Right ventricle myocardium superior (tissue), 1 donor: ENCODE measurements at regions of chr1 and their contacts with region 1.

Region 1: DNA sequence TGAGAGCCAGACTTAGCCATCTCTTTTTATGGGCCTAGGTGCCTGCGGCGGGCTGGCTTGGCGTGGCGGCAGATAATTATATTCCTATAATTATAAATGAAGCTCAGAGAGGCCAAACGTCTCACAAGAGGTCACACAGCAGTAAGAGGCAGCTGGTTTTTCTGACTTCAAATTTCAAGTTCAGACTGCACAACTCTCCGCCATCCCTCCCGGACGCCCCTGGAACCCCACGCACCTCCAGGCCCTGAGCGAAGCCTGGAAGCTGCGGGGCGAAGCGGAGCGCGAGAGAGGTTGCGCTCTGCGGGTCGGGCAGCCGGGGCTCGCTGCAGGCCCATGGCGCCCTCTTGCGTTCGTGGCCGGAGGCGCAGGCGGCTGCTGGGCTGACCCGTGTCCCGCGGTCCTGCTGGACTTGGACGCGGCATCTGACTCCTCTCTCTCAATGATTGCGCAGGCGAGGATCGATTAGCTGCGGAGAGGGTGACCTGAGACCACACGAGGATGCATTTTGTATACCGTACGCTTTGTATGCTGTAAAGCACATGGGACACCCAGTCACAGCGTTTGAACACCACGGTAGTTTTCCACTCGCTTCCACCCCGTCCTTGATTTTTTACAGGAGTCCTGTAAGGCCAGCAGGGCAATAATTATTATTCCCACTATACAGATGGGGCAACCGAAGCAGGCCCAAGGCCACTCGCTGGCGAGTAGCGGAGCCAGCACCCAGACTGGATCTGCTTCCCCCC is 272.7 kb downstream of the FOXD2 start:
- DNase-seq: peak; percentile 85
- ATAC-seq: peak; percentile 95

Region 2: DNA sequence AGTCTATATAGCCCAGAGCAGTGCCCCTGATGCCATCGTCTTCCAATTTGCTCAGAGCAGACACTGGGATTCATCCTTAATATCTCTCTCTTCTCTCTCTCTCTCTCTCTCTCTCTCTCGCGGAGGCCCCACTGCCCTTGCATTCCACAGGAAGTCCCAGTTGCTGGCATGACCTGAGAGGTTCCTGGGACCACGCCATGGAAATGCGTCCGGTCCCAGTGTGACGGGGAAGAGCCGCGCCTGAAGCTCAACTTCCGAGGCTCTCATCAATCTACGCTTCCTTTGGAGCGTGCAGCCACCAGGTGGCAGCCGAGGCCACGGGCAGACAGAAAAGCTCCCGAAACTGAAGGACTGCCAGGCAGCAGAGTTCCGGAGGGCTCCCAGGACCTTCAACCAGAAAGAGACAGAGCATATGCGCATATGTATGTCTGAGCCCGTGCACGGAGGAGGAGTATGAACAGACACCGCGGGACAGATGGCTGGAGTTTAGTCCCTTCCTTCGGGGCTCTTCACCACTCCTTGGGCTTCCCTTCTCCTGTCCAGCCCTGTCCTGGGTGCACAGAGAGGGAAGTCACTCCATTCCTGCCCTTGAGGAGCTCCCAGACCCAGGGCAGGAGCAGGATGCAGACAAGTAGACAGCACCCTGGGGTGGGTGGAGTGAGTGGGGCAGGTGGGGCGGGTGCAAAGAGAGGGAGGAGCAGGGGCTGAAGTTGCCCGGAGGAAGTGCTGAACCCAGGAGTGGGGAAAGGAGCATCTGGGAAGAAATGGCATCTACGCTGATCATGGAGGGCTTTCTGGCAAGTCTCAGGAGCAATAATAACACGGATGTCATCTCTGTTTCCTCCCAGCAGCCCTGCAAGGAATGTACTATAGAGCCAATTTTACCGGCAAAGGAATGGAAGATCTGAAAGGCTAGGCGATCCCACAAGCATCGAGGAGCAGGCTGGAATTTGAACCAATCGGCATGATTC is 531.2 kb before region 1 on chr1:
- intact Hi-C with region 1: loop called (anchors 5 kb)
- DNase-seq: peak; percentile 95
- ATAC-seq: peak; percentile 94

Region 3: DNA sequence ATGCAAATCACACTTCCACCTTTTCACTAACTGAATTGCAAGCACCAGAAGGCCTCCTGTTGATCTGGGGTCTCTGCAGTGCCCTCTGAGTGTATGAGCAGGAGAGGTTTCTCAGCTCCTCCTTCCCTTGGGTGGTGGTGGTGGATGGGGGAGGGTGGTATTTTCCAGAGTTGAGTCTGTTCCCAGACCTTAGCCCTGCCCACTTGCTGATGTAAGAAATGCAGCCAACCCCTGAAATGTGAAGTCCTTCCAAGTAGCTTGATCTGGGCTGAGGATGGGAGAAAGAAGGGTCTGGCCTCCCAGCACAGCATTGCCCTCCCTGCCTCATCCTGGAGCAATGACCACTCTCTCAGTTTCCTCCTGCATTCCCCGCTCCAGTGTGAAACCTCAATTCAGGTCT is 279.0 kb before region 1 on chr1:
- intact Hi-C with region 1: loop called (anchors 2 kb)
- DNase-seq: no peak
- ATAC-seq: no peak

Region 4: GRCh38 chr1:47507881-47508701 is 202.4 kb before region 1 on chr1:
- intact Hi-C with region 1: no loop called
- DNase-seq: peak; percentile 50
- ATAC-seq: peak; percentile 79

Region 5: GRCh38 chr1:47650197-47650596 is 60.3 kb before region 1 on chr1:
- intact Hi-C with region 1: no loop called
- DNase-seq: no peak
- ATAC-seq: no peak

Region 6: DNA sequence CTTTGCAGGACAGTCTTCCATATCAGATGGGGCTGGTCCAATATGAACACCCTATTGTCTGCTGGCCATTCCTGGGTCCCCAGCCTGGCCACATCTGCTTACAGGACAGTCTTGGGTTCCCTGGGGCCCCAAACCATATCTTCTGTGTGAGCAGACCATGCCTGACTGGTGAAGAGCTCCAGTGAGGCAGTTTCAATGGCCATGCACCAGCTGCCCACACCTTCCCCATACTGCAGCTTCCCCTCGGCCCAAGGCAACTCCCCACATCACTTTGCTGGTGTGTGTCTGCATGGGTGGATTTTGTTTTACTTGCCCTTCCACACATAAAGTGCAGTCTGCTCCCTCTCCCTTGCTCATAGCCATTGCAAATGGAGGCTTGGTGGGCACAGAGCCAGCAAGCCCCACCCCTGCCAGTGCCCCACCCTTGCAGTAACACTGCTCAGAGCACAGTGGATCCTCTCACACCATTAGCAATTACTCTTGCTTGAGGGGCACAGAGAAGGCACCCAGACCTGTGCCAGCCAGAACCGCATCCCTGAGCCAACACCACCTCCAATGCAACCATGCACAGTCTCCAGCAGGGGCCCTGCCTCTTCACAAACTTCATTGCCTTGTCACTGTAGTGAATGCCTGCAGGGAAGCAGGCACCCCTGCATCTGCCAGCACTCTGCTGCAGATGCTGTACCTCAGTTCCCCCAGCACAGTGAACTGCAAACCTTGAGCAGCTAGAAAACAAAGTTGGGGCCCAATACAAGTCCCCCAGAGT is 1540.7 kb after region 1 on chr1:
- intact Hi-C with region 1: no loop called
- DNase-seq: no peak
- ATAC-seq: no peak